K562 (cell line): ENCODE measurements at regions of chr6 and their contacts with region 1.

Region 1: GRCh38 chr6:135438907-135439535 is 58.5 kb downstream of the AHI1 start:
- DNase-seq: peak; percentile 33 to 66 (median 40)
- ATAC-seq: peak; percentile 85
- H3K4me3 ChIP-seq: no peak overlapping the region
- H3K27ac ChIP-seq: no peak overlapping the region
- H3K4me1 ChIP-seq: peaks cover 0 to 8% of the 10 kb centered on the region in 2 experiments; a peak in 3 of 5 replicates
- H3K27me3 ChIP-seq: no peaks in the 10 kb centered on the region
- CTCF ChIP-seq: peak; percentile 39 to 88 (median 63); a peak in 5 of 6 replicates
- EP300 ChIP-seq: no peak
- POLR2A ChIP-seq: no peak
- RAD21 ChIP-seq: peak; percentile 85 to 91

Region 2: DNA sequence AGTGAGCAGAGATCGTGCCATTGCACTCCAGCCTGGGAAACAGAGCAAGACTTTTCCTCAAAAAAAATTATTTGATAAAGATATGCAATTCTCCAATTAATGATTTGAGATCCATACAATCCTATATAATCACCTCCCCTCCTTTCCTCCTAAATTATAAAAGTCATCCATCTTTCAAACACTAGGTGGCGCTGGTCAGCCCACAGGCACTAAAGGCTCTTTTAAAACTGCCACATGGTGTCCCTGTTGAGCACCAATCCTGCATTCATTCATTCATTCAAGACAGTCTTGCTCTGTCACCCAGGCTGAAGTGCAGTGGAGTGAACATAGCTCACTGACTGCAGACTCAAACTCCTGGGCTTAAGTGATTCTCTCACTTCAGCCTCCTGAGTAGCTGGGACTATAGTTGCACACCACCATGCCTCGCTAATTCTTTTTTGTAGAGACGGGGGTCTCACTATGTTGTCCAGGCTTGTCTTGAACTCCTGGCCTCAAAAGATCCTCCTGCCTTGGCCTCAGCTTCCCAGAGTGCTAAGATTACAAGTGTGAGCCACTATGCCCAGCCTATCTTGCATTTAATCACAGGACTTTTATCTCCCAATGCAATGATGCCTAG is 1327.9 kb before region 1 on chr6:
- CTCF ChIA-PET with region 1: interaction called, 12 read pairs
- POLR2A ChIA-PET with region 1: no interaction called
- in situ Hi-C with region 1: no loop called
- intact Hi-C with region 1: no loop called
- DNase-seq: peak; percentile 79 to 85 (median 83)
- ATAC-seq: peak; percentile 86
- H3K4me3 ChIP-seq: no peak overlapping the region
- H3K27ac ChIP-seq: no peak overlapping the region
- H3K4me1 ChIP-seq: peaks cover 0 to 9% of the 10 kb centered on the region in 2 experiments; a peak in 2 of 5 replicates
- H3K27me3 ChIP-seq: peaks cover 10 to 20% of the 10 kb centered on the region in 2 experiments; a peak in 4 of 5 replicates
- CTCF ChIP-seq: peak; percentile 95 to 100 (median 100)
- EP300 ChIP-seq: no peak
- POLR2A ChIP-seq: no peak
- RAD21 ChIP-seq: peak; percentile 74 to 85

Region 3: DNA sequence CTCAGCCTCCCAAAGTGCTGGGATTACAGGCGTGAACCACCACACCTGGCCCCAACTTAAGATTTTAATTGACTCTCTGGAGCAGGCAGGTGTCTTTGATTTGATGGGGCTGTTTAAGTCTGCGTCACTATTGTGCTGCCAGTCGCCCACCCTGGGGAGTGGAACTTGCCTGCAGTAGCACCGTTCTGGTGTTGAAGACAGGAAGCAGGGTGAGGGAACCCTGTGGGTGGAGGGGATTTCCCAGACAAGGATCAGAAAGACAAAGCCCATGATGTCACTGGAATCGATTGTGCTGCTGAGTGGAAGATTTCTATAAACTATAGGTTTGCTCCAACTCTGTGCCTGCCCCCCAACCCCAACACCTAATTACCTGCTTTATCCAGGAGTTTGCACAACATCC is 500.1 kb before region 1 on chr6:
- CTCF ChIA-PET with region 1: no interaction called
- POLR2A ChIA-PET with region 1: no interaction called
- in situ Hi-C with region 1: no loop called
- intact Hi-C with region 1: loop called (anchors 2 kb)
- DNase-seq: no peak
- ATAC-seq: no peak
- H3K4me3 ChIP-seq: no peak overlapping the region
- H3K27ac ChIP-seq: no peak overlapping the region
- H3K4me1 ChIP-seq: no peaks in the 10 kb centered on the region; a peak in 1 of 5 replicates
- H3K27me3 ChIP-seq: peaks cover 0 to 2% of the 10 kb centered on the region in 2 experiments; a peak in 1 of 5 replicates
- CTCF ChIP-seq: no peak
- EP300 ChIP-seq: no peak
- POLR2A ChIP-seq: no peak
- RAD21 ChIP-seq: no peak

Region 4: GRCh38 chr6:135094403-135094848 is 344.6 kb before region 1 on chr6:
- CTCF ChIA-PET with region 1: no interaction called
- POLR2A ChIA-PET with region 1: no interaction called
- in situ Hi-C with region 1: no loop called
- intact Hi-C with region 1: loop called (anchors 5 kb)
- DNase-seq: no peak
- ATAC-seq: 0 out of 3 replicates have a peak, but pooled peaks have one; percentile 22
- H3K4me3 ChIP-seq: no peak overlapping the region
- H3K27ac ChIP-seq: no peak overlapping the region; the same call in 2 of the 3 replicates
- H3K4me1 ChIP-seq: peaks cover 18 to 61% of the 10 kb centered on the region in 2 experiments
- H3K27me3 ChIP-seq: no peaks in the 10 kb centered on the region
- CTCF ChIP-seq: no peak
- EP300 ChIP-seq: no peak
- POLR2A ChIP-seq: no peak
- RAD21 ChIP-seq: no peak

Region 5: DNA sequence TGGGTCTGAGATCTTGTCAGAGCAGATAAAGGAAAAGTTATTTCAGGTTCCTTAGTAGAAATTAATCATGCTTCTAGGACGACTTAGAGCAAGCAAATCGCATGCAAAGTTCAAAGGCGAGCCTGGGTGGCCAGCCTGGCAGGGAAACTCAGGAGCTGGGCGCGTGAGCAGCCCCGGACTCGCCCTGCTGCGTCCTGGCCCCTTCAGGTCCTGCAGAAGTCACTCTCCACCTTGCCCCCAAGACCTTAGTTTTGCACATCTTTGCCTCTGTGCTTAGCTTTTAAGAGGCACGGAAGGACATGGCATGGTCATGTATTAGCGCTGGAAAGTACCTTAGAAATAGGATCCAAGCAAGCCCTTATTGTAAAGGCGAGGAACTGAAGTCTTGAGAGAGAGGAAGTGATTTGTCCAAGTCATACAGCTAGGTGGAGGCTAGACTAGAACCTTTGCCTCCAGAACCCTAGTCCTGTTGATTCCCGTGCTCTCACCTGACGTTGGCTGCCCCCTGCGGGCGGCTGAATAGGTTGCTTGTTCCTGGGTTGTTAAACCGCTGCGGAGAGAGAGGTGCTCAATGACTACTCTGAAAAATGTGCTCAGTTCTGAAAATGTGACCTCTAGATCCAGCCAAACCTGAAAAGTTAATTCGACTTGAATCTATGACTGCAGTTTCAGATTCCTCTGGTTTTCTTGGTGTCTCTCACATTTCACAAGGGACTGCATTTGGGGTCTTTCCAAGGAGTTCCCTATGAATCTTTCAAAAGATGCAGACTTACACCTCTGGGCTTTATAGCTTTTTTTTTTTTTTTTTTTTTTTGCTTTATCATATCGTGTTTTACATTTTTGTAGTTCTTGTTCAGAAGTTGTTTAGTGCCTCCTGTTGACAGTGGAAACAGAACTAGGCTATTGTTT is 255.2 kb before region 1 on chr6:
- CTCF ChIA-PET with region 1: no interaction called
- POLR2A ChIA-PET with region 1: no interaction called
- in situ Hi-C with region 1: no loop called
- intact Hi-C with region 1: loop called (anchors 5 kb)
- DNase-seq: peak; percentile 66 to 96 (median 76)
- ATAC-seq: peak; percentile 81
- H3K4me3 ChIP-seq: peak overlapping the region; percentile 71
- H3K27ac ChIP-seq: peak overlapping the region; percentile 73
- H3K4me1 ChIP-seq: peaks cover 23 to 26% of the 10 kb centered on the region in 2 experiments
- H3K27me3 ChIP-seq: no peaks in the 10 kb centered on the region
- CTCF ChIP-seq: peak; percentile 87 to 92 (median 92)
- EP300 ChIP-seq: peak; percentile 10
- POLR2A ChIP-seq: no peak
- RAD21 ChIP-seq: peak; percentile 85 to 87

Region 6: DNA sequence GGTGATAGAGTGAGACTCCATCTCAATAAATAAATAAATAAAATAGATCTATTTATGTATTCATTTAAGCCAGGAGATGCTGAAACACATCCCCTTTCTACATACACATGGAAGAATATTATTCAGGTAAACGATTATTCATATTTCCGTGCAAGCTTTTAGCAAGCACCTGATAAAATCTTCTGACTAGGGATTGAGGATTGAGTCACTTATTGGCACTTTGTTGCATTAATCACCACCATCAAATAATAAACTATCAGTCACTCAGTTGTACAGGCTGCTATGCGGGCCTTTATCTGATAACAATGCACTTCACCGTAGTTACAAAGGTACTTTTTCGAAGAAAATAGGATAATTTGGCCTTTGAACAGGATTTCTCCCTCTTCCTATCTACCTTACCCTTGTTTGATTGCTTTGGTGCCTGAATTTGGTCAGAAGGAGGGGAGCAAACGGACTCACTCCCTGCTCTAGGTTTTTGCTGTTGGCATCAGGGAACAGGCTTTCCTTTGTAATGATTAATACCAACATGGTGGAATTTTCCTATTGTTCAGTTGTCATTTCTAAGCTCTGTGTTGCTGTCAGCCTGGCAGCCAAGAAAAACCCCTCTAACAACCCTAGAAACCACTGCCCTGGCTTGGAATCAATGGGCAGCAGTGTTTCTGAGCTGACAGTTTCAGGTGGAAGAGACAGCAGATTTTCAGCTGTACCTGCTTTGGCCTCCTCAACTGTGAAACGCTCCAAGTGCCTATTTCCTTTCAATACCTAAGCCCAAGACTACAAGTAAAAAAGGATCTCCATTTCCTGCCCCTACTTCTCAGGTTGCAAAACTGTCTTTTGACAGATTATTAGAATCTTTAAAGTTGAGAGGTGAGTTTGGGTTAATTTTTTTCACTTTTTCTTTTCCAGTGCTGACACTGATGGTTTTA is 194.9 kb before region 1 on chr6:
- CTCF ChIA-PET with region 1: no interaction called
- POLR2A ChIA-PET with region 1: no interaction called
- in situ Hi-C with region 1: no loop called
- intact Hi-C with region 1: no loop called
- DNase-seq: no peak
- ATAC-seq: no peak
- H3K4me3 ChIP-seq: no peak overlapping the region
- H3K27ac ChIP-seq: 0 out of 3 replicates have a peak overlapping the region, but pooled peaks have one; percentile 9
- H3K4me1 ChIP-seq: peaks cover 0 to 3% of the 10 kb centered on the region in 2 experiments; a peak in 1 of 5 replicates
- H3K27me3 ChIP-seq: no peaks in the 10 kb centered on the region
- CTCF ChIP-seq: no peak
- EP300 ChIP-seq: no peak
- POLR2A ChIP-seq: no peak
- RAD21 ChIP-seq: no peak

Region 7: GRCh38 chr6:135254461-135254860 is 184.6 kb before region 1 on chr6:
- CTCF ChIA-PET with region 1: no interaction called
- POLR2A ChIA-PET with region 1: no interaction called
- in situ Hi-C with region 1: no loop called
- intact Hi-C with region 1: no loop called
- DNase-seq: peak; percentile 31 to 66 (median 43)
- ATAC-seq: peak; percentile 82
- H3K4me3 ChIP-seq: no peak overlapping the region
- H3K27ac ChIP-seq: peak overlapping the region; percentile 27; the same call in 1 of the 3 replicates
- H3K4me1 ChIP-seq: peaks cover 6 to 48% of the 10 kb centered on the region in 2 experiments; a peak in 4 of 5 replicates
- H3K27me3 ChIP-seq: no peaks in the 10 kb centered on the region
- CTCF ChIP-seq: no peak
- EP300 ChIP-seq: no peak
- POLR2A ChIP-seq: no peak
- RAD21 ChIP-seq: no peak

Region 8: GRCh38 chr6:135382182-135382628 is 56.8 kb before region 1 on chr6:
- CTCF ChIA-PET with region 1: no interaction called
- POLR2A ChIA-PET with region 1: no interaction called
- in situ Hi-C with region 1: no loop called
- intact Hi-C with region 1: no loop called
- DNase-seq: no peak
- ATAC-seq: no peak
- H3K4me3 ChIP-seq: no peak overlapping the region
- H3K27ac ChIP-seq: no peak overlapping the region
- H3K4me1 ChIP-seq: peaks cover 0 to 4% of the 10 kb centered on the region in 2 experiments; a peak in 1 of 5 replicates
- H3K27me3 ChIP-seq: no peaks in the 10 kb centered on the region
- CTCF ChIP-seq: no peak
- EP300 ChIP-seq: no peak
- POLR2A ChIP-seq: no peak
- RAD21 ChIP-seq: no peak